ENCODE measurements at regions of chr7 and their contacts with region 1.

Region 1: DNA sequence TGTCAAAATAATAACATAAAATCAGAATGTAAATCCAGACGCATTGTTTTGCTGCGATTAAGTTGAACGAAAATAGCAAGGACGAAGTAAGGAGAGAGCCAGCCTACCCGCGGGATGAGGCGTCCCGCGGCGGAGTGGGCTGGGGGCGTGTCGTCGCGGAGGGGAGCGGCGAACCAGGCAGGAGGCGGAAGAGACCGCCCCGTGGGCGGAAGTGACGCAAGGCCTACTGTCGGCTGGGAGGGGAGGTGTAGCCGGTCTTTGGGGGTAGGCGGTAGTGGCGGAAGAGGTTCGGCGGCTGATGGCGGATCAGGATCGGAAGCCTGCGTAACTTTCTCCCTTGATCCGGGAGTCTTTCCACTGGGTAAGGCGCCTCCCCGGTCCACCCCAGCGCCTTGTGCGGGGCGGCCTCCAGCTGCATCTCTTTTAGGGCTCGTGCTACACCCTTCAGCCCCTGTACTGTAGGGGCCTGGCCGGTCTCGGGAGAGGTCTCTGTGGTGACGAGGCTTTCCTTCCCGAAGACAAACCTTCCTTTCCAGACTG is at the start of gene TAX1BP1:
- H3K4me3 Mint-ChIP-seq: peak within 1 kb of the TSS; percentile 96
- H3K27ac Mint-ChIP-seq: peak within 1 kb of the TSS; percentile 100
- H3K4me1 Mint-ChIP-seq: peaks cover 50% of the 10 kb centered on the region
- H3K27me3 Mint-ChIP-seq: no peaks in the 10 kb centered on the region

Region 2: GRCh38 chr7:27662490-27663205 is 77.3 kb before region 1 on chr7 and contains the start of gene HIBADH:
- intact Hi-C with region 1: loop called (anchors 2 kb)
- H3K4me3 Mint-ChIP-seq: peak within 1 kb of the TSS; percentile 79
- H3K27ac Mint-ChIP-seq: peak within 1 kb of the TSS; percentile 83
- H3K4me1 Mint-ChIP-seq: peaks cover 22% of the 10 kb centered on the region
- H3K27me3 Mint-ChIP-seq: no peaks in the 10 kb centered on the region

Region 3: DNA sequence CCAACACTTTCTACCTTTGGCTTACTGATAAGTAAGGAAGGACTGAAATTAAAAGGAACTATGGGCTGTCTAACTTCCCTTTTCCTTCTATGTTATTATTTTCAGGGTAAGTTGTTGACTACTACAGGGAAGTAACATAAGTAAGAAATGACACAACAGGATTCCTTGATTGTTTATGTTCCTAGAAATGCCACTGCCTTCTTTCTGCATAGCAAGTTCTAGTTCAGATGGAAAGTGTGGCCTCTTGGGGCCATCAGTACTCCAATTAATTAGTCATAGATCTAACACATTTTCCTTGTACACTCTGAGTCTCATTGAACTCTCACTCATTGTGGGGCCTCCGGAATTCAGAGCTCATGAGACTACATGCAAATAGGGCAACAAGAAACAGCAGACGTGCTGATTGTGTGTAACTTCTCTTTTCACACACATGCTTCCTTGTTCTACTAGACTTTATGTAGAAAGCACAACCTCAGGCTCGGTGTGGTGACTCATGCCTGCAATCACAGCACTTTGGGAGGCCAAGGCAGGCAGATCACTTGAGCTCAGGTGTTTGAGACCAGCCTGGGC is 42.0 kb before region 1 on chr7:
- intact Hi-C with region 1: loop called (anchors 5 kb)
- H3K4me3 Mint-ChIP-seq: peak overlapping the region; percentile 39
- H3K27ac Mint-ChIP-seq: peak overlapping the region; percentile 85
- H3K4me1 Mint-ChIP-seq: peaks cover 31% of the 10 kb centered on the region
- H3K27me3 Mint-ChIP-seq: peaks cover 6% of the 10 kb centered on the region

Measured in dendritic cell treated with granulocyte-macrophage colony-stimulating factor and Interleukin-4, amounts not matched to agents 40 ng/mL and 50 ng/mL, for 4 days (primary cell).